ENCODE measurements at regions of chrX and their contacts with region 1.

Region 1: GRCh38 chrX:1453951-1454785 is 1.5 kb upstream of the ASMTL start:
- DNase-seq: peak; percentile 67 to 92 (median 84)

Region 2: DNA sequence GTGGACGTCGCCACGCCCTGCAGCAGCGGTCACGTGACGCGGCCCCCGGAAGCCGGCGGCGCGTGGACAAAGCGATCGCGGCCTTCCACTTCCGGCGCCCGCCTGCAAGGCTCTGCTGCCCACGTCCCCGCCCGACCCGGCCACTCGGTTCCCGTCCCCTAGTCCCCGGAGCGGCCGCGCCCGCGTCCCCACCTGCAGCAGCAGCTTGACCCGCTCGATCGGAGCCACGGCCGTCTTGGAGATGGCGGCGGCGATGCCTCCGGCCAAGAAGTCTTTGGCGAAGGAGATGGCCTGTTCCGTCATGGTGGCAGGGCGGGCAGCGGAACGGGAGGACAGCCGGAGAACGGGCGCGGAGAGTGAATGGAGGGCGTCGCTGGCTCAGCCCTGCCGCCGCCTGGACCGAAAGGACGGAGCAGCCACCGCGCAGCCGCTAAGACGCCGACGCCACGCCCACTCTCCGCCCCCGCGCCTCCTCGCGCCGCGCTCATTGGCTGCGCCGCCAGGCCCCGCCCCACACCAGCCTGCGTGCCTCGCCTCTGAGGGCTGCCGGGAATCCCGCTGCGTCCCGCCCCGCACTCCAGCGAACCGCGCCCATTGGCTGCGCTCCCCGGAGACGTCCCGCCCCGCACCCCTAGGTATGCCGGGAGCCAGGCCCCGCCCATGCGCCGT is 62.3 kb before region 1 on chrX and contains the start of gene SLC25A6:
- intact Hi-C with region 1: loop called (anchors 2 kb)
- DNase-seq: peak; percentile 97 to 100 (median 99)

Region 3: GRCh38 chrX:1591102-1591900 is 137.1 kb after region 1 on chrX and contains the start of gene AKAP17A:
- intact Hi-C with region 1: loop called (anchors 5 kb)
- DNase-seq: peak; percentile 90 to 99 (median 98)

Region 4: DNA sequence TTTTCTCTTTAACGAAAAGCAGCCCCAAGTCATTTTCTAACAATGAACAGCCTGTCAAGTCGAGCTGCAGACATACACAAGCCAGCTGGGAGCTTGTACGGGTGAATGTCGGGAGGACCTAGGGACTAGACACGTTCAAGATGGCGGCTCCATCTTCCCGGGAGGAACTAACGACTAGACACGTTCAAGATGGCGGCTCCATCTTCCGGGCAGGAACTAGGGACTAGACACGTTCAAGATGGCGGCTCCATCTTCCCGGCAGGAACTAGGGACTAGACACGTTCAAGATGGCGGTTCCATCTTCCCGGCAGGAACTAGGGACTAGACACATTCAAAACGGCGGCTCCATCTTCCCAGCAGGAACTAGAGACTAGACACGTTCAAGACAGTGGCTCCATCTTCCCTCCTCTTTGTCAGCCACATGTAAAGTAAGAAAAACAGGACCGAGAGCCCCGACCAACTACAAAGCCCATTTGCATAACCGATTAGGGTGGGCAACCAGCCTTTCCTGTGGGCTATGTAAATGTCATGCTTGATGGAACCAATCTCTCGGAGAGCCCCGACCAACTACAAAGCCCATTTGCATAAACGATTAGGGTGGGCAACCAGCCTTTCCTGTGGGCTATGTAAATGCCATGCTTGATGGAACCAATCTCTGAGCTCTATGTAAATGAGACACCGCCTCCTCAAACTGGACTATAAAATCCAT is 871.1 kb after region 1 on chrX:
- intact Hi-C with region 1: loop called (anchors 10 kb)
- DNase-seq: peak in 41 of 42 donors; percentile 39 to 95 (median 85)

Measured in head of caudate nucleus (tissue), 42 donors.